Dendritic cell treated with granulocyte-macrophage colony-stimulating factor and Interleukin-4, amounts not matched to agents 40 ng/mL and 50 ng/mL, for 4 days (primary cell): ENCODE measurements at regions of chr19 and their contacts with region 1.

Region 1: DNA sequence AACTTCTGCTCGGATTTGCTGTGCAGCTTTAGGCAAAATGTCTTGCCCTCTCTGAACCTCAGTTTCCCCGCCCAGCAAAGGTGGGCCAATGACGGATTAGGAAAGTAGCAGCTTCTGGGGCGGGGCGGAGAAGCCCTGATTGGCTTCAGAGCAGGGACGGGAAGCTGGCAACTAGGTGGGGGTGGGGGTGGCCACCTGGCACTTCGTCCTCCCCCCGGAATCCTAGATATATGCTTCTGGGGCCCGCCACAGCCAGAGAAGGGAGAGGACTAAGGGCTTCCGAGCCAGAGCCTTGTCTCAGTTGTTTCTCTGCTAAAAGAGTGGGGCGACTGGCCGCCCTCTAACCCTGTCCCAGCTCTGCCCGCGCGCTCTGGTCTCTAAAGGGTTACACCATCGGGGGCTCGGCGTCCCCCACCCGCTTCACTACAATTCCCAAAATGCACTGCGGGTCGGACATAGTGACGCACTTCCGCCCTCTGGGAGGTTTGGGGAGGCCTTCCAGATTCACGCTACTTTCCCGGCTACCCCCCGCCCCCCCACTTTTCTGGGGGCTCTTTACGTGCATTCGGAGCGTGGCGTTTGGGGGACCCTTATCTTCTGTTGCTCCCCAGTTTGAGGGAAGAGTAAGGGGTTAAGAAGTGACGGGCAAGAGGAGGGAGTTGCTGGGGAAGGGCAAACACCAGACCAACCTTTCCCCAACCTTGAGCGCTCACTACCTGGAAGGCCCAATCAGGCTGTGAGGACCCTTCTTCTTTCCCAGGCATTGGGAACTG is 672 bp upstream of the IRF2BP1 start:
- H3K4me3 Mint-ChIP-seq: peak overlapping the region; percentile 85
- H3K27ac Mint-ChIP-seq: peak overlapping the region; percentile 89
- H3K4me1 Mint-ChIP-seq: peaks cover 34% of the 10 kb centered on the region
- H3K27me3 Mint-ChIP-seq: peaks cover 8% of the 10 kb centered on the region

Region 2: DNA sequence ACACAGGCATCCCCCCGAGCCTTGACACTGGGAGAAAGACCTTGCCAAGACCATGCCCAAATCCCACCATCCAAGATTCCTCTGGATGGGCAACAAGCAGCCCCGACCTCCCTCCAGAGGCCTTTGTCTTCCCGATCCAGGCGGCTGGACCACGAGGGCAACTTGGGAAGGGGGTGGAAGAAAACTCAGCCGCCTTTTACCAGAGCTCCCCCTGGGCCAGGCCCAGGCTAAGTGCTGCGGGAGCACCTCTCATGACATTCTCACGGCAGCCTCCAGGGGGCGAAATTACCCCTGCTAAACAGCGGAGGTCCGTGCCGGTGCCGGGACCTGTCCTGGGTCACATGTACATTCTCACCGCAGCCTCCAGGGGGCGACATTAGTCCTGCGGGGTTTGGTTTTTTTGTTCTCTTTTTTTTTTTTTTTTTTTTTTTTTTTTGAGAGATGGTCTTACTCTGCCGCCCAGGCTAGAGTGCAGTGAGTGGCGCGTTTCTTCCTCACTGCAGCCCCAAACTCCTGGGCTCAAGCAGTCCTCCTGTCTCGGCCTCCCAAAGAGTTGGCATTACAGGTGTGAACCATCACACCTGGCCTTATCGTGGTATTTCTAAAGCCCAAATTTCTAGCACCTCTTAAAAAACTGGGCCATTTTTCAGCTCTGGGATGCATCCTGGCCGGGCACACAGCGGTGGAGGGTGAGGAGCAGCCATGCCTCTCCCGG is 69.4 kb before region 1 on chr19:
- intact Hi-C with region 1: loop called (anchors 5 kb)
- H3K4me3 Mint-ChIP-seq: no peak overlapping the region
- H3K27ac Mint-ChIP-seq: no peak overlapping the region
- H3K4me1 Mint-ChIP-seq: peaks cover 15% of the 10 kb centered on the region
- H3K27me3 Mint-ChIP-seq: peaks cover 50% of the 10 kb centered on the region

Region 3: DNA sequence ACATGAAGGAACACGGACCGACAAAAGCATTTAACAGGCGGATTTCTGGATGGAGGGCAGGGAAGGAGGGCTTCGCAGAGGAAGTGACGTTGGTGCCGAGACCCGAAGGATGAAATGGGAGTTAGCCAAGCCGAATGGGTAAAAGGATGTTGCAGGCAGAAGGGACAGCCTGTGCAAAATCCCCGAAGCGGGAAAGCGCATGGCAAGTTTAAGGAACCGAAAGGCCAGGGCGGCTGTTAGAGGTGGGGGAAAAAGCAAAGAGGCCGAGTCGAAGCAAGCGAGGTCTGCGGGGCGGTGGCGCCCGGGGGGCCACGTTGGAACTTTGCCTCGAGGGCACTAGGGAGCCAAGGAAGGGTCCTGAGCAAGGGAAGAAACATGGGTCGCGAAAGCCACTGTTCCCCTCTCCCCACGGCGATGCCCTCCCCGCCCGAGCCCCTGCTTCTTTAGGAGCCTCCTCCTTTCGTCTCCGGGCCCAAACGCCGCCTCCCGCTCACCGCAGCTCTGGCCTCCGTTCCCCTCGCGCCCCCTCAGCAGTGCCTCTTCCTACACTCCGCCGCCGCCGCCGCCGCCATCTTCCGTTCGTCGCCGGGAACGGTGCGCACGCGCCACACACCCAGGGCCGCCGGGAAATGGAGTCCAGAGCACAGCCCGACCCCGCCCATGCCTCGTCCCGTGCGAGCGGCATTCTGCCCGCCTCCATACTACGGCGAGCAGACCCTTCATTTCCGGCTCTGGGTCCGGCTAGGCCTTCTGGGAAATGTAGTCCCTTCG is 23.9 kb before region 1 on chr19 and contains the start of gene SYMPK:
- intact Hi-C with region 1: loop called (anchors 1 kb)
- H3K4me3 Mint-ChIP-seq: peak within 1 kb of the TSS; percentile 91
- H3K27ac Mint-ChIP-seq: peak within 1 kb of the TSS; percentile 90
- H3K4me1 Mint-ChIP-seq: peaks cover 40% of the 10 kb centered on the region
- H3K27me3 Mint-ChIP-seq: peaks cover 44% of the 10 kb centered on the region